Mammary epithelial cell (primary cell): ENCODE measurements at regions of chr5 and their contacts with region 1.

Region 1: GRCh38 chr5:149561848-149562247 is 10.6 kb upstream of the CSNK1A1 start:
- DNase-seq: peak; percentile 92
- H3K4me3 ChIP-seq: peak overlapping the region in 2 of 3 experiments; percentile 36 to 38
- H3K27ac ChIP-seq: peak overlapping the region; percentile 89
- H3K4me1 ChIP-seq: peaks cover 36% of the 10 kb centered on the region
- H3K27me3 ChIP-seq: no peaks in the 10 kb centered on the region
- CTCF ChIP-seq: no peak

Region 2: DNA sequence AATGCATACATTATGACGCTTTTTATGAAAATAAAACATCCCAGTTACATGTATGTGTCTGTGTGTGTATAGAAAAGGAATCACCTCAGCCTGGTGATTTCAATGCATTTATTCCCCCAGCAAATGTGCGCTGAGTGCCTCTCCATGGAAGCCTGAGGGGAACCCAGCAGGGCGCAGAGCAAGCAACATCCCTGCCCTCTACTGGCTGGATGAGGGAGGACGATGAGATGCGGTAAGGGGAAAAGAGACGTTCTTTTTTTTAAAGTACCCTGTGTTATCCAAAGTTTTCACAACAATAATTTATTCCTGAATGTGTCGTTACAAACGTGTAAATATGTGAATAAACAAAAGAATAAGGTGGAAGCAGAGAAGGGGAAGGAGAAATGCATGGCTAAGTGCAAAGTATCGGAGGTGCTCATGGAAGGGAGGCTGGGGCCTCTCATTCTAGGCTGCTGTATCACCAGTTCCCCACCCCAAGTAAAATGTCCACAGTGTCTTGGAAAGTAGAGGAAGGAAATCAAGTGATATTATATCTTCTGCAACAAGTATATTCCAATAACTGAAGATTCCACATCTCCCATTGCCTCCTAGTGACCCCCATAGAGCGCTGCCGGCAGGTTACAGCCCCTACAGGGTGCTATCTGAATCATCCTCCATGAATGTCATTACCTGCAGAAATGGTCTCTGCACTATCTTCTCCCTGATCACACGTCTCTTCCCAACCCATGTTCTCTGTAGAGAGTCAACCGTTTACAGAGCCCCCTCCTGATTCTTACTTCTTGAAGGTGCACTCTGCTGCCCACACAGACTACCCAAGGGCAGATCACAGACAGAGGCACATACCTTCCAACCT is 433.6 kb before region 1 on chr5:
- CTCF ChIA-PET with region 1: no interaction called
- dilution Hi-C with region 1: no loop called
- in situ Hi-C with region 1: no loop called
- intact Hi-C with region 1: loop called (anchors 5 kb)
- DNase-seq: no peak
- H3K4me3 ChIP-seq: no peak overlapping the region
- H3K27ac ChIP-seq: no peak overlapping the region
- H3K4me1 ChIP-seq: peaks cover 58% of the 10 kb centered on the region
- H3K27me3 ChIP-seq: no peaks in the 10 kb centered on the region
- CTCF ChIP-seq: peak; percentile 70 to 76

Region 3: GRCh38 chr5:149177911-149178565 is 383.8 kb before region 1 on chr5:
- CTCF ChIA-PET with region 1: no interaction called
- dilution Hi-C with region 1: no loop called
- in situ Hi-C with region 1: no loop called
- intact Hi-C with region 1: no loop called
- DNase-seq: no peak
- H3K4me3 ChIP-seq: no peak overlapping the region
- H3K27ac ChIP-seq: no peak overlapping the region
- H3K4me1 ChIP-seq: peaks cover 16% of the 10 kb centered on the region
- H3K27me3 ChIP-seq: no peaks in the 10 kb centered on the region
- CTCF ChIP-seq: no peak

Region 4: DNA sequence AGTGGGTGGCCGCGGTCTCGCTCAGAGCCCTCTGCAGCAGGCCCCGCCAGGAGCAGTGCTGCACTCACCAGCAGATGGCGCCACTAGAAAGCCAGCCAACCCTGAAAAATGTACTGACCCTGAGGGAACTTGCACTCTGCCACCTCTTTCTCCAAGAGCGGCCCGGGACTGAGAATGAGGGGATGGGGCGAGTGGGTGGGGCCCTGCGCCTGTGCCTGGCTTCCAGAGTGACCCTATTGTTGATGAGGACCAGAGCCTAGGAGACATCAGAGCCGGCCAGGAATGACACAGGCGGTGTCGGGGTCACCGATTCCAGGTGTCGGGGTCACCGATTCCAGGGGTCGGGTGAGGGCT is 179.9 kb before region 1 on chr5:
- CTCF ChIA-PET with region 1: interaction called, 5 read pairs
- dilution Hi-C with region 1: no loop called
- in situ Hi-C with region 1: loop called (anchors 10 kb)
- intact Hi-C with region 1: loop called (anchors 1 kb)
- DNase-seq: peak; percentile 49
- H3K4me3 ChIP-seq: no peak overlapping the region
- H3K27ac ChIP-seq: no peak overlapping the region
- H3K4me1 ChIP-seq: peaks cover 13% of the 10 kb centered on the region
- H3K27me3 ChIP-seq: no peaks in the 10 kb centered on the region
- CTCF ChIP-seq: peak; percentile 90 to 96

Region 5: DNA sequence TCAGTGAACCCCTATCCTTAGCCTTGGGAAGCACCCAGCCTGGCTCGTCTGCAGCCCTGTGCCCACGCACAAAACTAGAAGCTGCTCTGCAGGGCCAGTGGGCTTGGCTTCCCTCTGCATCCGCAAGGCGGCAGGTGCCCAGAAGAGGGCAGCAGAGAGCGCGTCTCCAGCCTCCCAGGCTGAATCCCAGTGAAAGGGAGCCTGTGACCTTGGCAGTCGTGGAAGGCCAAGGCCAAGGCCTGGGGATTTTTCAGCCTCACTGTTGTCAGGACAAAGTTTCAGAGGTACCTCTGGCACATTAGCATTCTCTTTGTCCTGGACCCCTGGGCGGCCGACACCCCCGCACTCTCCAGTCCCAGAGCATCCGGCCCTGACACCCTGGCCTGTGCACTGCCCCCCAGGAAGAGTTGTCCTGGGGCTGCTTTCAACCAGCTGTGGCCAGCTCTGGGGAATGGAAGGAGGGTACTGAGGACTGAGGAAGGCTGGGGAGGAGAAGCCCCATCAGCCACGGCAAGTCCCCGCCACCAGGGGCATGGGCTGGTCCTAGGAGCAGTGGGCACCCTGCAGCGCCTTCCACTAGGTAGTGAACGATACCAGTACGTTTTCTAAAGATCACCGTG is 119.2 kb before region 1 on chr5:
- CTCF ChIA-PET with region 1: interaction called, 3 read pairs
- dilution Hi-C with region 1: no loop called
- in situ Hi-C with region 1: loop called in 1 of 2 experiments (anchors 5 kb)
- intact Hi-C with region 1: loop called (anchors 1 kb)
- DNase-seq: peak; percentile 80
- H3K4me3 ChIP-seq: no peak overlapping the region
- H3K27ac ChIP-seq: peak overlapping the region; percentile 89
- H3K4me1 ChIP-seq: peaks cover 70% of the 10 kb centered on the region
- H3K27me3 ChIP-seq: no peaks in the 10 kb centered on the region
- CTCF ChIP-seq: peak; percentile 91 to 94

Region 6: DNA sequence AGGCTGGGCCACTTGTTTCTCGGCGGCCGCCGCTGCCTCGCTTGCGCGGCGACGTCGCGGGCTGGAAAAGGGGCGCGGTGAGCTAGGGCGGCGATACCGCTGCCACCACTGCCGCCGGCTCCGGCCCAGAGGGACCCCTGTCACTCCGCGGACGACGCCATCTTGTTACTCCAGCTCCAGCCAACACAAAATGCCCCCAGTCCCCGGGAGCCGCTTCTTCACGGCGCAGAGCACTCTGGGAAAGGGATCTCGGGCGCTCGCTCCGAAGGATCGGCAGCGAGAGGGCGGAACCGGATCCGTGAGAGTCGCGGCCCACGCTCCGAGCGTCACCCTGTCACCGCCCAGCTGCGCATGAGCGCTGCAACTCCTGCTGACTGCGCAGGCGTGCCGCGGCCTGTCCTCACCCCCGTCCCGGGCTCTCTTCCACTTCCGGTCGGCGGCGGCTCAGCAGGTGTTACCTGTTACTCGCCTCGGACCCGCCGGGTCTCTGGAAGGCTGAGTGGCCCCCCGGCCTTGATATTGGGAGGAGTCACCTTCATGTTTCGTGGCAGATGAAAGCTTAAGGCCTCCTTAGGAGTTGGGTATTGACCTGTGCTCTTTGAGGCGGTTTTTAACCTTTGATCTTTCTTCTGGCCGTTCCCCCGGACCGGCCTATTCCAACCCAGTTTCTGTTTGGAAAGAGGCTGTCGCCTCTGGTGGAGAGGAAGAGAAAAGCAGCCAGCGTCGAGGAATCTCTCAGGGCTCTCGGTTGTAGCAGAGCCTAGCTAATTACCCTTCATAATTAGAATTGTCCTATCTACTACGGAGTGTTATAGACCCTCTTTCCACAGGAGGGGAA is 10.4 kb before region 1 on chr5 and contains the start of gene CSNK1A1:
- CTCF ChIA-PET with region 1: interaction called, 3 read pairs
- dilution Hi-C with region 1: no loop called
- in situ Hi-C with region 1: no loop called
- intact Hi-C with region 1: loop called (anchors 1 kb)
- DNase-seq: peak; percentile 99
- H3K4me3 ChIP-seq: peak within 1 kb of the TSS; percentile 71 to 94 (median 77)
- H3K27ac ChIP-seq: peak within 1 kb of the TSS; percentile 91
- H3K4me1 ChIP-seq: peaks cover 20% of the 10 kb centered on the region
- H3K27me3 ChIP-seq: no peaks in the 10 kb centered on the region
- CTCF ChIP-seq: peak; percentile 65 to 82
- total RNA-seq, gene CSNK1A1: 444 to 457 TPM